ENCODE measurements at regions of chr1 and their contacts with region 1.

Region 1: GRCh38 chr1:9867408-9868243 is 42.4 kb downstream of the CTNNBIP1 start:
- DNase-seq: peak; percentile 91
- CTCF ChIP-seq: peak; percentile 99

Region 2: GRCh38 chr1:9615316-9616063 is 252.1 kb before region 1 on chr1:
- CTCF ChIA-PET with region 1: interaction called, 21 read pairs
- POLR2A ChIA-PET with region 1: no interaction called
- DNase-seq: peak; percentile 83
- CTCF ChIP-seq: peak; percentile 86

Region 3: DNA sequence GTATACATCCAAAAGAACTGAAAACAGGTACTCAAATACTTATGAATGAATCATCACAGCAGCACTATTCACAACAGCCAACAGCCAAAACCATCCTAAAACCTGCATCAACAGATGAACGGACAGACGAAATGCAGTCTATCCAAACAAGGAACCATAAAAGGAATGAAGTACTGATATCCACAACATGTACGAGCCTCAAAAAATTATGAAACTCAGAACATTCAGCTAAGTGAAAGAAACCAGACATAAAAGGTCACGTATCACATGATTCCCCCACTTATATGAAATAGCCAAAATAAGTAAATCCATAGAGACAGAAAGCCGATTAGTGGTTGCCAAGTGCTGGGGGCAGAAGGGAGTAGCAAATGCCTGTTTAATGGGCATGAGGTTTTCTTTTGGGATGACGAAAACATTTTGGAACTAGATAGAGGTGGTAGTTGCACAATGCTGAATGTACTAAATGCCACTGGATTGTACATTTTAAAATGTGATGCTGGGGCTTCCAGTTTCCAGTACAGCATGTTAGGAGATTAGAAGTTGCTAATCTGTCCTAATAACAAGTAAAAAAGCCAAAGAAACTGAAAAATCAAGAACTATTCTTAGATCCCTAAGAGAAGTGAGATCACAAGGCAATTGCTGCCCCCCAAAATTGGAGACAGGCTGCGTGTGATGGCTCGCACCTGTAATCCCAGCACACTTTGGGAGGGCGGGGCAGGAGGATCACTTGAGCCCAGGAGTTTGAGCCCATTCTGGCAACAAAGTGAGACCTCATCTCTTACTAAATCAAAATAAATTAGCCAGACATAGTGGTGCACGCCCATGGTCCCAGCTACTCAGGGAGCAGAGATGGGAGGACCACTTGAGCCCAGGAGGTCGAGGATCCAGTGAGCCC is 69.1 kb before region 1 on chr1:
- CTCF ChIA-PET with region 1: no interaction called
- POLR2A ChIA-PET with region 1: no interaction called
- DNase-seq: no peak
- CTCF ChIP-seq: no peak

Region 4: DNA sequence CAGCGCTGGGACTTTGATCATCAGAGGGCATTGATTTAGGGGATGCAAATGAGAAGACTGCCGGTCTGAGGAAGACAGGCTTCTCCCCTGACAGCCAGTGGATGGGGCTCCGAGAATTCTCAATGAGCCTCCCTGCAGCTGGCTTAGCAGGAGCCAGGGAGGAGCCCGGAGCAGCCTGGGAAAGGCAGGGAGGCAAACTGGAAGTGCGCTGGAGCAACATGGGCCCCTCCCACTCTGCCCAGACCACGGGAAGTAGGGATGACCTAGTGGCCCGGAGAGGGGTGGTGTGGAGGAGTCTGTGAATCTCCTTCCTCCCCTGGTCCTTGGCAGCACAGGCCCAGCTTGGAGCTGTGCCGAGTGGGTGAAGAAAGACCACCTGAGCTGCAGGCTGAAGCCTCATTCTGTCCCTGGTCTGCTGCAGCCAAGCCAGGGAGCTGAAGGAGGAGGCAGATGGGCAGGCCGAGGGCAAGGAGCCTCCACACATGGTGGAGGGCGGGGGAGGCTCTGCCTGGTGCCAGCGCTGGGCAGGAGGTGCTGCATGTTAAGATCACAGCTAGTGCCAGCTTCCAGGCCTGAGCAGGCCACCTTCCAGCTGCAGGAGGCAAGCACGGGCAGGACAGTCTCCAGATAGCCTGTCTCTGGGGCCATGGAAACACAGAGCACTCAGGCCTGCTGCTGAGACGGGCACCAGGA is 31.7 kb before region 1 on chr1:
- CTCF ChIA-PET with region 1: no interaction called
- POLR2A ChIA-PET with region 1: no interaction called
- DNase-seq: peak; percentile 10
- CTCF ChIP-seq: no peak

Region 5: GRCh38 chr1:9852410-9853248 is 15.0 kb before region 1 on chr1:
- CTCF ChIA-PET with region 1: interaction called, 10 read pairs
- POLR2A ChIA-PET with region 1: no interaction called
- DNase-seq: no peak
- CTCF ChIP-seq: no peak